ENCODE measurements at regions of chr19 and their contacts with region 1.

Region 1: GRCh38 chr19:57570707-57571106 is 8.0 kb downstream of the ZNF416 start:
- DNase-seq: no peak
- H3K4me3 ChIP-seq: no peak overlapping the region
- H3K27ac ChIP-seq: no peak overlapping the region
- H3K4me1 ChIP-seq: no peaks in the 10 kb centered on the region
- H3K27me3 ChIP-seq: no peaks in the 10 kb centered on the region
- CTCF ChIP-seq: no peak
- POLR2A ChIP-seq: no peak

Region 2: GRCh38 chr19:57389730-57390598 is 180.7 kb before region 1 on chr19 and contains the start of gene ZNF548:
- intact Hi-C with region 1: no loop called
- DNase-seq: peak; percentile 97 to 98
- H3K4me3 ChIP-seq: peak within 1 kb of the TSS; percentile 23 to 72 (median 61)
- H3K27ac ChIP-seq: peak within 1 kb of the TSS; percentile 82 to 94 (median 90)
- H3K4me1 ChIP-seq: peaks cover 10 to 17% of the 10 kb centered on the region in 2 donors
- H3K27me3 ChIP-seq: no peaks in the 10 kb centered on the region
- CTCF ChIP-seq: peak in 4 of 6 experiments; percentile 22 to 48 (median 37)
- POLR2A ChIP-seq: peak in 1 of 2 donors; percentile 74
- total RNA-seq, gene ZNF548: 22.3 to 31.0 (median 28.1) TPM

Region 3: GRCh38 chr19:57620673-57621199 is 50.0 kb after region 1 on chr19:
- intact Hi-C with region 1: loop called (anchors 5 kb)
- DNase-seq: no peak
- H3K4me3 ChIP-seq: no peak overlapping the region
- H3K27ac ChIP-seq: no peak overlapping the region
- H3K4me1 ChIP-seq: no peaks in the 10 kb centered on the region
- H3K27me3 ChIP-seq: no peaks in the 10 kb centered on the region
- CTCF ChIP-seq: no peak
- POLR2A ChIP-seq: no peak